Activated CD4-positive, alpha-beta T cell treated with anti-CD3 and anti-CD28 coated beads, Interleukin-2, amount 10 ng/mL, durations not matched to agents 24 days and 14 days (primary cell): ENCODE measurements at regions of chr19 and their contacts with region 1.

Region 1: GRCh38 chr19:2016041-2016807 is 710 bp upstream of the BTBD2 start:
- DNase-seq: peak; percentile 88
- H3K4me3 Mint-ChIP-seq: peak overlapping the region; percentile 82
- H3K27ac Mint-ChIP-seq: peak overlapping the region; percentile 35
- H3K4me1 Mint-ChIP-seq: peaks cover 8% of the 10 kb centered on the region
- H3K27me3 Mint-ChIP-seq: no peaks in the 10 kb centered on the region

Region 2: GRCh38 chr19:1929021-1929742 is 87.0 kb before region 1 on chr19:
- intact Hi-C with region 1: loop called (anchors 10 kb)
- DNase-seq: peak; percentile 95
- H3K4me3 Mint-ChIP-seq: peak overlapping the region; percentile 79
- H3K27ac Mint-ChIP-seq: no peak overlapping the region
- H3K4me1 Mint-ChIP-seq: peaks cover 16% of the 10 kb centered on the region
- H3K27me3 Mint-ChIP-seq: peaks cover 1% of the 10 kb centered on the region

Region 3: GRCh38 chr19:2041683-2042484 is 25.7 kb after region 1 on chr19:
- intact Hi-C with region 1: loop called (anchors 2 kb)
- DNase-seq: peak; percentile 100
- H3K4me3 Mint-ChIP-seq: peak overlapping the region; percentile 82
- H3K27ac Mint-ChIP-seq: peak overlapping the region; percentile 94
- H3K4me1 Mint-ChIP-seq: peaks cover 14% of the 10 kb centered on the region
- H3K27me3 Mint-ChIP-seq: no peaks in the 10 kb centered on the region